ENCODE measurements at regions of chr10 and their contacts with region 1.

Region 1: DNA sequence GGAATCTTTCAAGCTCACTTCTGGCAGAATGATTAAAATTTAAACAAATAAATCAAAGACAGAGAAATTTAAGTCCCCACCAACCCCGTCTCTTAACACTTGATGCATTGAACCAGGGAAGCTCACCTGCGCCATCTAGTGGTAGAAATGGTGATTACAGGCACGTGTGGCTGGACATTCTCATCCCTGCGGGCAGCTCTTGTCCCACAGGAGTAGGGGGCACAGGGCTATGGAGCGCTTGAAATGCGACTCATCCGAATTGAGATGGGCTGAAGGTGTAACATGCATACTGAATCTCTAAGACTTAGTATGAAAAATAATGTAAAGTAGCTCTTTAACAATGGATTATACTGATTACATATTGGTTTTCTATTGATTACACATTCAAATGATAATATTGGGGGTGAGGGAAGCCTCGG is 24.8 kb upstream of the SLIT1 start:
- DNase-seq: peak; percentile 82
- ATAC-seq: peak; percentile 77
- H3K4me3 Mint-ChIP-seq: no peak overlapping the region
- H3K27ac Mint-ChIP-seq: no peak overlapping the region
- H3K4me1 Mint-ChIP-seq: no peaks in the 10 kb centered on the region
- H3K27me3 Mint-ChIP-seq: no peaks in the 10 kb centered on the region

Region 2: GRCh38 chr10:96765406-96766240 is 444.9 kb before region 1 on chr10:
- CTCF ChIA-PET with region 1: no interaction called
- POLR2A ChIA-PET with region 1: no interaction called
- intact Hi-C with region 1: loop called (anchors 2 to 10 kb)
- DNase-seq: peak; percentile 88
- ATAC-seq: peak; percentile 96
- H3K4me3 Mint-ChIP-seq: no peak overlapping the region
- H3K27ac Mint-ChIP-seq: no peak overlapping the region
- H3K4me1 Mint-ChIP-seq: no peaks in the 10 kb centered on the region
- H3K27me3 Mint-ChIP-seq: no peaks in the 10 kb centered on the region

Region 3: DNA sequence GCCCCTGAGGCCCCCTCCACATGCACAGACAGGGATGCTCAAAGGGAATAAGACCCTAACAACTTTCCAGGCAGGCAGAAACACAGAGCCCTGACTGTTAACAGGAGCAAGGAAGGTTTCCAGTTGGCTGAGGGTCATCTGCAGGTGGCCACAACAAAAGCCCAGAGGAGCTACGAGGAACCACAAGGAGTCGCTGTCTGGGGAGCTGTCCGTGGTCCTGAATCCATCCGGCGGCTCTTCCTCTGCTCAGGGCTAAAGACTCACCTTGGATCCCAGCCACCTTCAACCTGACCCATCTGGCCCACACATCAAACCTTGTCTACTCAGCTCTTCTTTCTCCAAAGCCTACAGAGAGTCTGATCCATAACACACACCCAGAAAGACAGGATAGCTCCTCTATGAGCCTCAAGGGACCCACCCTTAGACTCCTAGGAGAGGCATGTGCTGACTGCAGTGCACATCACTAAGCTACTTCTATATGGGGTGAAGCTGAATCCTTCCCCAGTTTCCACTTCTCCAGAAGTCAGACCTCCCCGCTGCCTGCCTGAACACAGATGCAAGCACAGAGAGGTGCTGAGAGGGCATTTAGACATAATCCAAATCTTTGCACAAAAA is 128.8 kb before region 1 on chr10:
- CTCF ChIA-PET with region 1: interaction called, 20 read pairs
- POLR2A ChIA-PET with region 1: no interaction called
- intact Hi-C with region 1: no loop called
- DNase-seq: peak; percentile 83
- ATAC-seq: peak; percentile 73
- H3K4me3 Mint-ChIP-seq: no peak overlapping the region
- H3K27ac Mint-ChIP-seq: no peak overlapping the region
- H3K4me1 Mint-ChIP-seq: no peaks in the 10 kb centered on the region
- H3K27me3 Mint-ChIP-seq: peaks cover 20% of the 10 kb centered on the region

Region 4: DNA sequence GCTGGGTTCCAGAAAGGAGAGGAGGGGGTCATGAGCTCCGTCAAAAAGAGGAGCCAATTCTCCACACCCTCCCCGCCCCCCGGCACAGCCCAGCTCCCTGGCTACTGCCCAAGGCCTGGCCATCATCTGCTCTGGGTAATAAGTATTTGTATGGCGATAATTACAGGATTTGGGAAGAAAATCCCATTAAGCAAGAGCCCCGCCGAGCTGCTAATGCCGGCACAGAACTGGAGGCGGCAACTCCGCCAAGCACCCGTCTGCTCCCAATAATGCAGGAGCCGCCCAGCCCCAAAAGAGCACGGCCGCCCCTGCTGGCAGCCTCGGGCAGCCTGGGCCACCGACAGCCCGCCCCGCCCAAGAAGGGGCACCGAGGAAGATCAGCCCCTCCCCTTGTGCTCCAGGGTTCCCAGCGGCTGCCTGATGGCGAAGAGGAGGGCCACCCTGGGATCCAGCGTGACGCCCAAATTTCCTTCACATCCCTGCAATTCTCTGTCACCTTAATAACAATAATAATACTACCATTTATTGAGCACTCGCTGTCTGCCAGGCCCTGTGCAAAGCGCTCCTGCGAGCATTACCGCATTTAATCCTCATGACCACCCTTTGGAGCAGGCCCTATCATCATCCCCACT is 30.7 kb before region 1 on chr10:
- CTCF ChIA-PET with region 1: interaction called, 10 read pairs
- POLR2A ChIA-PET with region 1: no interaction called
- intact Hi-C with region 1: no loop called
- DNase-seq: peak; percentile 30
- ATAC-seq: peak; percentile 44
- H3K4me3 Mint-ChIP-seq: no peak overlapping the region
- H3K27ac Mint-ChIP-seq: no peak overlapping the region
- H3K4me1 Mint-ChIP-seq: peaks cover 2% of the 10 kb centered on the region
- H3K27me3 Mint-ChIP-seq: peaks cover 29% of the 10 kb centered on the region

Region 5: GRCh38 chr10:97222326-97222961 is 11.9 kb after region 1 on chr10:
- CTCF ChIA-PET with region 1: interaction called, 37 read pairs
- POLR2A ChIA-PET with region 1: no interaction called
- intact Hi-C with region 1: no loop called
- DNase-seq: no peak
- ATAC-seq: no peak
- H3K4me3 Mint-ChIP-seq: no peak overlapping the region
- H3K27ac Mint-ChIP-seq: no peak overlapping the region
- H3K4me1 Mint-ChIP-seq: peaks cover 27% of the 10 kb centered on the region
- H3K27me3 Mint-ChIP-seq: no peaks in the 10 kb centered on the region

Region 6: DNA sequence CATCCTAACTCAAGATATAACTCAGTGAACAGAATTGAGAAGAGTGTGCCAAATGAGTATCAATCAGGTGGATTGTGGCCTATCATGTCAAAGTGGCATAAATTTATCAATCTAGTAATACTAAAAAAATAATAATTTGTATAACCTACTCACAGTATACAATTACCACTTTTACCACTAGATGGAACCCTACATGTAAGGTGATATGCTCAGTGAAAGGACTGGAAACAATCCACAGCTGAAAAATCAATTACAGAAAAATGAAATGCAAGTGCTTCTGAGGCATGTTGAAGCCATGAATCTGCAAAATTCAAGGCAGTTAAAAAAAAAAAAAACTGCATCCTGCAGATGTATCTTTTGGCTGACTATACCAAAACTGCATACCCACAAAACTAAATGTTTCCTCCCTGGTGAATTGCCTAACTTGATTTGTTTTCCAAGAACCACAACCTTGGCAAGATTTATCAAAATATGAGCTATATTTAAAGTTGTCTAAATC is 68.0 kb after region 1 on chr10:
- CTCF ChIA-PET with region 1: interaction called, 13 read pairs
- POLR2A ChIA-PET with region 1: no interaction called
- intact Hi-C with region 1: no loop called
- DNase-seq: no peak
- ATAC-seq: peak; percentile 64
- H3K4me3 Mint-ChIP-seq: no peak overlapping the region
- H3K27ac Mint-ChIP-seq: no peak overlapping the region
- H3K4me1 Mint-ChIP-seq: peaks cover 22% of the 10 kb centered on the region
- H3K27me3 Mint-ChIP-seq: no peaks in the 10 kb centered on the region

Region 7: GRCh38 chr10:97445722-97446639 is 235.4 kb after region 1 on chr10 and contains the starts of genes EXOSC1 and ZDHHC16:
- CTCF ChIA-PET with region 1: no interaction called
- POLR2A ChIA-PET with region 1: no interaction called
- intact Hi-C with region 1: no loop called
- DNase-seq: peak; percentile 96
- ATAC-seq: peak; percentile 91
- H3K4me3 Mint-ChIP-seq: peak within 1 kb of the TSS; percentile 86
- H3K27ac Mint-ChIP-seq: peak within 1 kb of the TSS; percentile 90
- H3K4me1 Mint-ChIP-seq: peaks cover 55% of the 10 kb centered on the region
- H3K27me3 Mint-ChIP-seq: no peaks in the 10 kb centered on the region
- total RNA-seq, gene EXOSC1: 52.3 to 54.2 TPM
- total RNA-seq, gene ZDHHC16: 34.6 to 42.8 TPM

Measured in activated CD4-positive, alpha-beta T cell treated with anti-CD3 and anti-CD28 coated beads for 36 hours (primary cell).